ENCODE measurements at regions of chr17 and their contacts with region 1.

Region 1: DNA sequence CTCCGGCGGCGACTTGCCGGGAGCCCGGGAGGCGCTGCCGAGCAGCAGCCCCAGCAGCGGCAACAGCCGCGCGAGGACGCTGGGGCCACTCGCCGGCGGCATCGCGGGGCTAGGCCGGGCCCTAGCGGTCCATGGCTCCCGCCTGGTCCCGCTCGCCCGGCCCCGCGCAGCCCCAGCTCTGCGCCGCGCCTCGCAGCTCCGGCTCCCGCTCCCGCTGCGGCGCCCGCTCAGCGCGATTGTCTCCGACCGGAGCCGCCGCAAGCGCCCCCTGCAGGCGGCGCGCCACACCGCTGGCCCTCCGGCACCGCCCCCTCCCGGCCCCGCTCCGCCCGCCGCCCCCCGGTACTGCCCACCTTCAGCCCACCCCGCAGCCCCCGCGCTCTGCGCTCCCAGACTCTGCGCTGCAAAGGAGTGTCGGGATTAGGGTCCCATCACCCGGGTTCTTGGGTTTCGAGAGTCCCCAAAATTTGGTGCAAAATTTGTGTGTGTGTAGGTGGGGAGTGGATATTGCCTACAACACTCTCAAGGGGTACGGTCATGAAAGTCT is at the start of gene FAM171A2:
- DNase-seq: peak; percentile 70
- ATAC-seq: peak; percentile 93
- H3K4me3 Mint-ChIP-seq: peak within 1 kb of the TSS; percentile 73
- H3K27ac Mint-ChIP-seq: no peak within 1 kb of the TSS
- H3K4me1 Mint-ChIP-seq: peaks cover 4% of the 10 kb centered on the region
- H3K27me3 Mint-ChIP-seq: peaks cover 40% of the 10 kb centered on the region
- total RNA-seq, gene FAM171A2: 0.37 to 0.45 TPM

Region 2: GRCh38 chr17:44258811-44259351 is 104.8 kb before region 1 on chr17:
- CTCF ChIA-PET with region 1: no interaction called
- POLR2A ChIA-PET with region 1: no interaction called
- DNase-seq: no peak
- ATAC-seq: no peak
- H3K4me3 Mint-ChIP-seq: no peak overlapping the region
- H3K27ac Mint-ChIP-seq: no peak overlapping the region
- H3K4me1 Mint-ChIP-seq: no peaks in the 10 kb centered on the region
- H3K27me3 Mint-ChIP-seq: peaks cover 7% of the 10 kb centered on the region

Region 3: GRCh38 chr17:44376124-44376523 is 12.4 kb after region 1 on chr17:
- CTCF ChIA-PET with region 1: interaction called, 11 read pairs
- POLR2A ChIA-PET with region 1: interaction called, 3 read pairs
- DNase-seq: peak; percentile 38
- ATAC-seq: peak; percentile 49
- H3K4me3 Mint-ChIP-seq: no peak overlapping the region
- H3K27ac Mint-ChIP-seq: no peak overlapping the region
- H3K4me1 Mint-ChIP-seq: no peaks in the 10 kb centered on the region
- H3K27me3 Mint-ChIP-seq: peaks cover 7% of the 10 kb centered on the region

Region 4: GRCh38 chr17:44438636-44439035 is 75.0 kb after region 1 on chr17:
- CTCF ChIA-PET with region 1: no interaction called
- POLR2A ChIA-PET with region 1: no interaction called
- DNase-seq: peak; percentile 33
- ATAC-seq: peak; percentile 49
- H3K4me3 Mint-ChIP-seq: no peak overlapping the region
- H3K27ac Mint-ChIP-seq: peak overlapping the region; percentile 31
- H3K4me1 Mint-ChIP-seq: peaks cover 21% of the 10 kb centered on the region
- H3K27me3 Mint-ChIP-seq: no peaks in the 10 kb centered on the region

Measured in activated CD8-positive, alpha-beta T cell treated with anti-CD3 and anti-CD28 coated beads, Interleukin-2, amount 10 ng/mL, durations not matched to agents 7 days and 5 days (primary cell).